Activated naive CD4-positive, alpha-beta T cell treated with anti-CD3 and anti-CD28 coated beads for 36 hours (primary cell): ENCODE measurements at regions of chr5 and their contacts with region 1.

Region 1: DNA sequence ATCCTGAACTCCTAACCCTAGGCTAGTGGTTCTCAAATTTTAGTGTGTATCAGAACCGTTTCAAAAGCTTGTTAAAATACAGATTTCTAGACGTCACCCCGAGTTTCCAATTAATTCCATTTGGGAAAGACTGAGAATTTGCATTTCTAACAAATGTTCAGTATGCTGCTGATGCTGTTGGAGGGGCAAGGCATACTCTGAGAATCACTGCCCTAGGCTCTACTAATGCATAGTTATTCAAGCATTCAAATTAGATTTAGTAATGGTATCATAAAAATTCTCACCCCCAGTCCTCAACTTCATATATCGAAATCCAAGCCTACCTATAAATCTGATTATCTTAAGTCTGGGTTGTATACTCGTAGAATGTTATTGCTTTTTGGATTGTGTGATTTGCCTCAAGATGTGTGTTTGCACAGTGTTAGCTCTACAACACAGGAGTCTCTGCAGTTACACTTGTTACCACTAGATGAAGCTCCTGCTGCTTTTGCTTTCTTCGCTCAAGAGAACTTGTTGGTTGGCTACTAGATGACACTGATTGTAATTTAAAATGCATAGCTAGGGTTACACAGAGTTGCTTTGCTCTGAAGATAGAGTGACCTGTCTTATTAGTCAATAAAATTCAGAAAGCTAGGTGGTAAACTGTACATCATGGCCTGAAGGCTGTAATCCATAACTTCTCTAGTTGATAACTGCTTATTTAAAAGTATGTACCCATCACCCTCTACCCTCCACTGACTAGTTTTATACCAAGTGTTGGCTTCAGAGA is 7.5 kb upstream of the ERAP2 start:
- DNase-seq: peak; percentile 39
- H3K4me3 Mint-ChIP-seq: no peak overlapping the region
- H3K27ac Mint-ChIP-seq: peak overlapping the region; percentile 93
- H3K4me1 Mint-ChIP-seq: peaks cover 54% of the 10 kb centered on the region
- H3K27me3 Mint-ChIP-seq: no peaks in the 10 kb centered on the region

Region 2: GRCh38 chr5:96344678-96345577 is 523.9 kb before region 1 on chr5:
- CTCF ChIA-PET with region 1: no interaction called
- intact Hi-C with region 1: loop called (anchors 10 kb)
- DNase-seq: peak; percentile 27
- H3K4me3 Mint-ChIP-seq: no peak overlapping the region
- H3K27ac Mint-ChIP-seq: no peak overlapping the region
- H3K4me1 Mint-ChIP-seq: peaks cover 25% of the 10 kb centered on the region
- H3K27me3 Mint-ChIP-seq: peaks cover 4% of the 10 kb centered on the region

Region 3: GRCh38 chr5:96794757-96795156 is 74.0 kb before region 1 on chr5:
- CTCF ChIA-PET with region 1: interaction called, 7 read pairs
- intact Hi-C with region 1: loop called (anchors 2 kb)
- DNase-seq: peak; percentile 84
- H3K4me3 Mint-ChIP-seq: no peak overlapping the region
- H3K27ac Mint-ChIP-seq: peak overlapping the region; percentile 67
- H3K4me1 Mint-ChIP-seq: peaks cover 42% of the 10 kb centered on the region
- H3K27me3 Mint-ChIP-seq: no peaks in the 10 kb centered on the region

Region 4: GRCh38 chr5:96919754-96920197 is 51.0 kb after region 1 on chr5:
- CTCF ChIA-PET with region 1: interaction called, 7 read pairs
- intact Hi-C with region 1: loop called (anchors 1 kb)
- DNase-seq: peak; percentile 67
- H3K4me3 Mint-ChIP-seq: no peak overlapping the region
- H3K27ac Mint-ChIP-seq: peak overlapping the region; percentile 56
- H3K4me1 Mint-ChIP-seq: peaks cover 59% of the 10 kb centered on the region
- H3K27me3 Mint-ChIP-seq: no peaks in the 10 kb centered on the region

Region 5: DNA sequence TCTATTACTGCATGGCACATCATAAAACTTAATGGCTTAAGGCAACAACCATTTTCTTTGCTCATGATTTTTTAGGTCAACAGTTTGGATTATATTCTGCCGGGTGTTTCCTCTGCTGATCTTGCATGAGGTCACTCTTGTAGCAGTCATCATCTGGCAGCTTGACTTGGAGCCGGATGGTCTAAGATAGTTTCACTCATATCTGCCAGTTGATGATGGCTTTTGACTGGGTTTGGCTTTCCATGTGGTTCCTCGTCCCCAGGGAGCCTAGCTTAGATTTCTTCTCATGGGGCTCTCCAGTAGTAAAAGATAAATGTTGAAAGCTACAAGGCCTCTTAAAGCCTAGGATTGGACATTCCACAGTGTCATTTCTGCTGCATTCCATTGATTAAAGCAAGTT is 94.5 kb after region 1 on chr5:
- CTCF ChIA-PET with region 1: interaction called, 7 read pairs
- intact Hi-C with region 1: loop called (anchors 1 kb)
- DNase-seq: peak; percentile 47
- H3K4me3 Mint-ChIP-seq: peak overlapping the region; percentile 69
- H3K27ac Mint-ChIP-seq: peak overlapping the region; percentile 95
- H3K4me1 Mint-ChIP-seq: peaks cover 73% of the 10 kb centered on the region
- H3K27me3 Mint-ChIP-seq: no peaks in the 10 kb centered on the region

Region 6: GRCh38 chr5:97094579-97095317 is 226.0 kb after region 1 on chr5:
- CTCF ChIA-PET with region 1: no interaction called
- intact Hi-C with region 1: loop called (anchors 1 kb)
- DNase-seq: peak; percentile 68
- H3K4me3 Mint-ChIP-seq: no peak overlapping the region
- H3K27ac Mint-ChIP-seq: no peak overlapping the region
- H3K4me1 Mint-ChIP-seq: peaks cover 16% of the 10 kb centered on the region
- H3K27me3 Mint-ChIP-seq: peaks cover 6% of the 10 kb centered on the region

Region 7: GRCh38 chr5:97844801-97845200 is 976.0 kb after region 1 on chr5:
- CTCF ChIA-PET with region 1: no interaction called
- intact Hi-C with region 1: no loop called
- DNase-seq: no peak
- H3K4me3 Mint-ChIP-seq: no peak overlapping the region
- H3K27ac Mint-ChIP-seq: no peak overlapping the region
- H3K4me1 Mint-ChIP-seq: no peaks in the 10 kb centered on the region
- H3K27me3 Mint-ChIP-seq: peaks cover 2% of the 10 kb centered on the region

Region 8: GRCh38 chr5:98773464-98774191 is 1904.8 kb after region 1 on chr5 and contains the start of gene RGMB:
- CTCF ChIA-PET with region 1: no interaction called
- intact Hi-C with region 1: loop called (anchors 5 kb)
- DNase-seq: peak; percentile 96
- H3K4me3 Mint-ChIP-seq: peak within 1 kb of the TSS; percentile 99
- H3K27ac Mint-ChIP-seq: peak within 1 kb of the TSS; percentile 77
- H3K4me1 Mint-ChIP-seq: peaks cover 36% of the 10 kb centered on the region
- H3K27me3 Mint-ChIP-seq: peaks cover 10% of the 10 kb centered on the region
- total RNA-seq, gene RGMB: 5.0 to 5.9 TPM